CD8-positive, alpha-beta memory T cell (primary cell): ENCODE measurements at regions of chr5 and their contacts with region 1.

Region 1: GRCh38 chr5:136080483-136081216 is 51.9 kb downstream of the TGFBI start:
- DNase-seq: peak in 4 of 5 donors; percentile 32 to 75 (median 51)
- H3K4me3 ChIP-seq: peak overlapping the region; percentile 27
- H3K4me3 Mint-ChIP-seq: peak overlapping the region; percentile 65 to 93 (median 81)
- H3K27ac ChIP-seq: no peak overlapping the region
- H3K27ac Mint-ChIP-seq: peak overlapping the region in 6 of 8 donors; percentile 13 to 87 (median 64)
- H3K4me1 ChIP-seq: no peaks in the 10 kb centered on the region
- H3K4me1 Mint-ChIP-seq: peaks cover 4 to 12% (median 5%) of the 10 kb centered on the region in 3 donors
- H3K27me3 ChIP-seq: peaks cover 22% of the 10 kb centered on the region
- H3K27me3 Mint-ChIP-seq: peaks cover 25 to 44% of the 10 kb centered on the region in 2 donors

Region 2: DNA sequence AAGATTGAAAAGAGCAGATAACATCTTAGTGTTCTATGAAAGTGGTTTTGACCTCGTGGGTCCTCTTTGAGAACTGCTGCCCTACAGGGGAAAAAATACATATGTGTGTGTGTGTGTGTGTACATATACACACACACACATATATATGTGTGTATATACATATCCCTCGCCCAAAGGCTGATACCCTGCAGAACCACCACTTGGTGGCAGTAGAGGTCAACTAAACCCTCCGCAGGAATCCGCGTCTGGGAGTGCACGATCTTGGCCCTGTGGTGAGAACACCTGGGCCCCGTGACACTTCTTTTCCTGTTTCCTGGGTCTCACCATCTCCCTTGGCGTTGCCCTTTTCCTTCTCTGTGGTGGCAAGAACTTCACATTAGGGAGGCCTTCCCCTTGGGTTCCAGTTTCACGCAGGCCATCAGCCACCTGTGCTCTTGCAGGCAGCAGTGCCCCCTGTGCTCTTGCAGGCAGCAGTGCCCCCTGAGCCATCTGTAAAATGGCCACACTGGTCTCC is 193.2 kb before region 1 on chr5:
- CTCF ChIA-PET with region 1: interaction called, 10 read pairs
- POLR2A ChIA-PET with region 1: no interaction called
- DNase-seq: peak; percentile 31 to 73 (median 53)
- H3K4me3 ChIP-seq: no peak overlapping the region
- H3K4me3 Mint-ChIP-seq: peak overlapping the region in 6 of 7 donors; percentile 24 to 69 (median 50)
- H3K27ac ChIP-seq: no peak overlapping the region
- H3K27ac Mint-ChIP-seq: peak overlapping the region in 1 of 8 donors; percentile 13
- H3K4me1 ChIP-seq: peaks cover 5% of the 10 kb centered on the region
- H3K4me1 Mint-ChIP-seq: peaks cover 8 to 17% (median 14%) of the 10 kb centered on the region in 3 donors
- H3K27me3 ChIP-seq: no peaks in the 10 kb centered on the region
- H3K27me3 Mint-ChIP-seq: peaks cover 10 to 27% of the 10 kb centered on the region in 2 donors

Region 3: GRCh38 chr5:135944967-135945560 is 135.6 kb before region 1 on chr5:
- CTCF ChIA-PET with region 1: interaction called, 19 read pairs
- POLR2A ChIA-PET with region 1: no interaction called
- DNase-seq: peak in 2 of 5 donors; percentile 25 to 44
- H3K4me3 ChIP-seq: no peak overlapping the region
- H3K4me3 Mint-ChIP-seq: no peak overlapping the region
- H3K27ac ChIP-seq: no peak overlapping the region
- H3K27ac Mint-ChIP-seq: no peak overlapping the region
- H3K4me1 ChIP-seq: no peaks in the 10 kb centered on the region
- H3K4me1 Mint-ChIP-seq: no peaks in the 10 kb centered on the region
- H3K27me3 ChIP-seq: no peaks in the 10 kb centered on the region
- H3K27me3 Mint-ChIP-seq: peaks cover 7 to 20% of the 10 kb centered on the region in 2 donors